Naive thymus-derived CD4-positive, alpha-beta T cell (primary cell): ENCODE measurements at regions of chr5 and their contacts with region 1.

Region 1: DNA sequence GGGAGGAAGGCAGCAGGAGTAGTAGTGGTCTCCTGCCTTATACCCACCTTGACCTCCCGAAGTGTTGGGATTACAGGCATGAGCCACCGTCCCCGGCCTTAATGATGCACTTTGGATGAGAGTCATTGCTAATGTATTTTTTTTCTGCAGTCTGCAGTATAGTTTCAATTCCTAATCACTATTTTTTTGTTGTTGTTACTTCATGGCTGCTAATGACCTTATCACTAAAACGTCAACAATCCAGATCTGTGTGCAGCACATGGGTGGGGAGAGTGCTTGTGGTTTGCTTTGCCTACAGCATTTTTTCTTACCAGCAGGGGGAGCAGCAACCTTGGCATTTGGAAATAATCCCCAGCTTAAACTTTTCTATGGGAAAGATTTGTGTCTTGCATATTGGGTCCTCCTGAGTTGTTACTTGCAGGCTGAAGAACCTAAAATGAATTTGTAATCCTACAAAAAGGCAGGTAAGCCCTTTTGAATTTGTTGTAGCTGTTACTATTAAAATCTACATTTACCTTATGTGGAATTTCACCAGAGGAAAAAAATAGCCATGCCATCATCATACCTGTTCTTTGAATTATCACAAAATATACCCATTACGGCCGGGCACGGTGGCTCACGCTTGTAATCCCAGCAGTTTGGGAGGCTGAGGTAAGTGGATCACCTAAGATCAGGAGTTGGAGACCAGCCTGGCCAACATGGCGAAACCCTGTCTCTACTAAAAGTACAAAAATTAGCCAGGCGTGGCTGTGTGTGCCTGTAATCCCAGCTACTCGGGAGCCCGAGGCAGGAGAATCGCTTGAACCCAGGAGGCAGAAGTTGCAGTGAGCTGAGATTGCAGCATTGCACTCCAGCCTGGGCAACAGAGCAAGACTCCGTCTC is 6.3 kb upstream of the MED7 start:
- DNase-seq: peak; percentile 46 to 86 (median 80)
- ATAC-seq: peak; percentile 94
- H3K4me3 ChIP-seq: no peak overlapping the region
- H3K4me3 Mint-ChIP-seq: peak overlapping the region in 7 of 10 donors; percentile 1 to 73 (median 33)
- H3K27ac ChIP-seq: peak overlapping the region; percentile 42
- H3K27ac Mint-ChIP-seq: peak overlapping the region; percentile 5 to 85 (median 80)
- H3K4me1 ChIP-seq: peaks cover 15 to 31% of the 10 kb centered on the region in 2 donors
- H3K4me1 Mint-ChIP-seq: peaks cover 25 to 56% (median 42%) of the 10 kb centered on the region in 7 donors
- H3K27me3 ChIP-seq: no peaks in the 10 kb centered on the region
- H3K27me3 Mint-ChIP-seq: no peaks in the 10 kb centered on the region

Region 2: GRCh38 chr5:157159209-157159751 is 10.3 kb after region 1 on chr5:
- CTCF ChIA-PET with region 1: interaction called, 7 read pairs
- POLR2A ChIA-PET with region 1: interaction called, 34 read pairs
- intact Hi-C with region 1: loop called in 1 of 2 experiments (anchors 1 kb)
- DNase-seq: peak in 7 of 9 donors; percentile 31 to 76 (median 58)
- ATAC-seq: peak; percentile 84
- H3K4me3 ChIP-seq: peak overlapping the region; percentile 7
- H3K4me3 Mint-ChIP-seq: peak overlapping the region in 9 of 10 donors; percentile 42 to 76 (median 55)
- H3K27ac ChIP-seq: peak overlapping the region; percentile 67
- H3K27ac Mint-ChIP-seq: peak overlapping the region; percentile 68 to 84 (median 79)
- H3K4me1 ChIP-seq: peaks cover 43 to 44% of the 10 kb centered on the region in 2 donors
- H3K4me1 Mint-ChIP-seq: peaks cover 34 to 78% (median 70%) of the 10 kb centered on the region in 7 donors
- H3K27me3 ChIP-seq: no peaks in the 10 kb centered on the region
- H3K27me3 Mint-ChIP-seq: no peaks in the 10 kb centered on the region

Region 3: GRCh38 chr5:157189223-157189622 is 40.2 kb after region 1 on chr5:
- CTCF ChIA-PET with region 1: interaction called, 17 read pairs
- POLR2A ChIA-PET with region 1: interaction called, 62 read pairs
- intact Hi-C with region 1: no loop called
- DNase-seq: no peak
- ATAC-seq: no peak
- H3K4me3 ChIP-seq: peak overlapping the region; percentile 68
- H3K4me3 Mint-ChIP-seq: peak overlapping the region; percentile 83 to 100 (median 96)
- H3K27ac ChIP-seq: peak overlapping the region; percentile 81
- H3K27ac Mint-ChIP-seq: peak overlapping the region; percentile 63 to 98 (median 91)
- H3K4me1 ChIP-seq: peaks cover 75 to 81% of the 10 kb centered on the region in 2 donors
- H3K4me1 Mint-ChIP-seq: peaks cover 56 to 94% (median 83%) of the 10 kb centered on the region in 7 donors
- H3K27me3 ChIP-seq: no peaks in the 10 kb centered on the region
- H3K27me3 Mint-ChIP-seq: no peaks in the 10 kb centered on the region

Region 4: GRCh38 chr5:157219491-157220271 is 70.7 kb after region 1 on chr5:
- CTCF ChIA-PET with region 1: interaction called, 20 read pairs
- POLR2A ChIA-PET with region 1: interaction called, 19 read pairs
- intact Hi-C with region 1: loop called (anchors 1 to 2 kb)
- DNase-seq: peak in 1 of 9 donors; percentile 54
- ATAC-seq: no peak
- H3K4me3 ChIP-seq: no peak overlapping the region
- H3K4me3 Mint-ChIP-seq: peak overlapping the region in 9 of 10 donors; percentile 39 to 89 (median 65)
- H3K27ac ChIP-seq: peak overlapping the region; percentile 63
- H3K27ac Mint-ChIP-seq: peak overlapping the region; percentile 89 to 98 (median 94)
- H3K4me1 ChIP-seq: peaks cover 82 to 87% of the 10 kb centered on the region in 2 donors
- H3K4me1 Mint-ChIP-seq: peaks cover 54 to 94% (median 85%) of the 10 kb centered on the region in 7 donors
- H3K27me3 ChIP-seq: no peaks in the 10 kb centered on the region
- H3K27me3 Mint-ChIP-seq: no peaks in the 10 kb centered on the region

Region 5: DNA sequence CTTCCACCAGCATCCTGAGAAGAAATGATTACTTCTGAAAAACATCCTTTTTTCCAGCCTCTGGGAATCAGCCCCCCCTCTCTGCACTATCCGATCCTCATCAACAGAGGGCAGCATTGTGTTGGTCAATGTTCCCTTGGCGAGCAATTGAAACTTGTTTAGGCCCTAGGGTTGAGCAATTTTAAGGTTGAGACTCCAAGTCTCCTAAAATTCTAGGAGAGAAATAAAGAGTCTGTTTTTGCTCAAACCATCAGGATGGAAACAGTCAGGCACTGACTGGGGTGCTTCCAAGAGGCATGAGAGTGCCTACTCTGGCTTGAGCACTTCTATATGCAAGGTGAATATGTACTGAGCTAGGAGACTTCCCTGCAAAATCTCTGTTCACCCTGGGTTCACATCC is 104.6 kb after region 1 on chr5:
- CTCF ChIA-PET with region 1: interaction called, 18 read pairs
- POLR2A ChIA-PET with region 1: interaction called, 24 read pairs
- intact Hi-C with region 1: loop called (anchors 1 kb)
- DNase-seq: no peak
- ATAC-seq: peak; percentile 44
- H3K4me3 ChIP-seq: peak overlapping the region; percentile 31
- H3K4me3 Mint-ChIP-seq: peak overlapping the region; percentile 62 to 79 (median 72)
- H3K27ac ChIP-seq: peak overlapping the region; percentile 66
- H3K27ac Mint-ChIP-seq: peak overlapping the region; percentile 86 to 98 (median 96)
- H3K4me1 ChIP-seq: peaks cover 93 to 97% of the 10 kb centered on the region in 2 donors
- H3K4me1 Mint-ChIP-seq: peaks cover 64 to 99% (median 94%) of the 10 kb centered on the region in 7 donors
- H3K27me3 ChIP-seq: no peaks in the 10 kb centered on the region
- H3K27me3 Mint-ChIP-seq: no peaks in the 10 kb centered on the region

Region 6: GRCh38 chr5:157476702-157477408 is 327.9 kb after region 1 on chr5:
- CTCF ChIA-PET with region 1: interaction called, 3 read pairs
- POLR2A ChIA-PET with region 1: no interaction called
- intact Hi-C with region 1: loop called (anchors 2 to 10 kb)
- DNase-seq: peak in 5 of 9 donors; percentile 14 to 34 (median 17)
- ATAC-seq: peak; percentile 60
- H3K4me3 ChIP-seq: no peak overlapping the region
- H3K4me3 Mint-ChIP-seq: no peak overlapping the region
- H3K27ac ChIP-seq: no peak overlapping the region
- H3K27ac Mint-ChIP-seq: peak overlapping the region in 1 of 9 donors; percentile 56
- H3K4me1 ChIP-seq: no peaks in the 10 kb centered on the region
- H3K4me1 Mint-ChIP-seq: peaks cover 0 to 79% (median 0%) of the 10 kb centered on the region in 7 donors
- H3K27me3 ChIP-seq: no peaks in the 10 kb centered on the region
- H3K27me3 Mint-ChIP-seq: no peaks in the 10 kb centered on the region